Naive thymus-derived CD4-positive, alpha-beta T cell (primary cell): ENCODE measurements at regions of chr17 and their contacts with region 1.

Region 1: DNA sequence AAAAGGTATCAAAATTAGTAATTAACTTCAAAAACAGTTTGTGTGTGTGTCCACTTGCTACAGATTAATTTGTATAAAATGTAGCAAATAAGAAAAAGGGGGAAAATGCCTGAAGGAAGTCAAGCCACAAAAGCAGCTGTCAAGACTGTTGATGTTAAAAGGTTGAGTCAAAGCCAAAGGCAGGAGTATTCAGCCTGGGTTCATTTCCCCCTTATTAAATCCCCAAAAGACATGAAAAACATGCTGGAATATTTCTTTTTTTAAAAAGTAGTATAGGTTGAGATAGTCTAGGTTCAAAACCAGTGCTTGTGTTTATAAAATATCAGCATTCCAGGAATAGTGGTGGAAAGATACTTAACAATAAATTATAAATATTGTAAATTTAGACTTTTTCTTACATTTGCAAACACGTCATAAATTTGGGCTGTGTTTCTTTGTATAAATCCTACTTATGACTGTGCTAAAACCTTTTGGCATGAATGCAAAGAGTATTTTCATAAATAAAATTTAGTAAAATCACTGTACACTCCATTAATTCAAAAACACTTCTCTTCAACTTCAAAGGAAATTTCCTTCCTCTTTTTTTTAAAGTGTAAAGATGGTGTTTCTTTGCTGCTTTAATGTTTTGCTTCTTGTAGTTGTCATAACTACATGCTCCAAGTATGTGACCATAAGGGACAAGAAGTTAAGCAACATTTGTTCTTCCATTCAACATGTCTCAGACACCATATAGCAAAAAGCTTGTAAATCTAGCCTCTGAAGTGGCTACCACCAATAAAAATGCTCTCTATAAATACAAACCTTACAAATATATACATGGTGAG is 72.0 kb downstream of the SKAP1 start:
- DNase-seq: no peak
- ATAC-seq: peak; percentile 27
- H3K4me3 ChIP-seq: no peak overlapping the region
- H3K4me3 Mint-ChIP-seq: no peak overlapping the region
- H3K27ac ChIP-seq: no peak overlapping the region
- H3K27ac Mint-ChIP-seq: peak overlapping the region in 3 of 9 donors; percentile 2 to 63 (median 8)
- H3K4me1 ChIP-seq: peaks cover 0 to 4% of the 10 kb centered on the region in 2 donors
- H3K4me1 Mint-ChIP-seq: peaks cover 4 to 44% (median 26%) of the 10 kb centered on the region in 7 donors
- H3K27me3 ChIP-seq: no peaks in the 10 kb centered on the region
- H3K27me3 Mint-ChIP-seq: no peaks in the 10 kb centered on the region

Region 2: GRCh38 chr17:48374650-48375230 is 16.7 kb after region 1 on chr17:
- CTCF ChIA-PET with region 1: interaction called, 4 read pairs
- POLR2A ChIA-PET with region 1: no interaction called
- intact Hi-C with region 1: loop called in 1 of 2 experiments (anchors 2 kb)
- DNase-seq: peak in 5 of 9 donors; percentile 7 to 21 (median 13)
- ATAC-seq: peak; percentile 68
- H3K4me3 ChIP-seq: no peak overlapping the region
- H3K4me3 Mint-ChIP-seq: no peak overlapping the region
- H3K27ac ChIP-seq: no peak overlapping the region
- H3K27ac Mint-ChIP-seq: peak overlapping the region in 2 of 9 donors; percentile 47 to 50
- H3K4me1 ChIP-seq: peaks cover 6 to 17% of the 10 kb centered on the region in 2 donors
- H3K4me1 Mint-ChIP-seq: peaks cover 18 to 44% (median 36%) of the 10 kb centered on the region in 7 donors
- H3K27me3 ChIP-seq: no peaks in the 10 kb centered on the region
- H3K27me3 Mint-ChIP-seq: no peaks in the 10 kb centered on the region

Region 3: GRCh38 chr17:48394821-48395220 is 36.8 kb after region 1 on chr17:
- CTCF ChIA-PET with region 1: interaction called, 4 read pairs
- POLR2A ChIA-PET with region 1: interaction called, 3 read pairs
- intact Hi-C with region 1: loop called in 1 of 2 experiments (anchors 5 kb)
- DNase-seq: no peak
- ATAC-seq: no peak
- H3K4me3 ChIP-seq: no peak overlapping the region
- H3K4me3 Mint-ChIP-seq: no peak overlapping the region
- H3K27ac ChIP-seq: no peak overlapping the region
- H3K27ac Mint-ChIP-seq: peak overlapping the region in 2 of 9 donors; percentile 22 to 32
- H3K4me1 ChIP-seq: peaks cover 0 to 4% of the 10 kb centered on the region in 2 donors
- H3K4me1 Mint-ChIP-seq: peaks cover 19 to 78% (median 70%) of the 10 kb centered on the region in 7 donors
- H3K27me3 ChIP-seq: no peaks in the 10 kb centered on the region
- H3K27me3 Mint-ChIP-seq: no peaks in the 10 kb centered on the region